Endothelial cell of umbilical vein (primary cell): ENCODE measurements at regions of chr6 and their contacts with region 1.

Region 1: DNA sequence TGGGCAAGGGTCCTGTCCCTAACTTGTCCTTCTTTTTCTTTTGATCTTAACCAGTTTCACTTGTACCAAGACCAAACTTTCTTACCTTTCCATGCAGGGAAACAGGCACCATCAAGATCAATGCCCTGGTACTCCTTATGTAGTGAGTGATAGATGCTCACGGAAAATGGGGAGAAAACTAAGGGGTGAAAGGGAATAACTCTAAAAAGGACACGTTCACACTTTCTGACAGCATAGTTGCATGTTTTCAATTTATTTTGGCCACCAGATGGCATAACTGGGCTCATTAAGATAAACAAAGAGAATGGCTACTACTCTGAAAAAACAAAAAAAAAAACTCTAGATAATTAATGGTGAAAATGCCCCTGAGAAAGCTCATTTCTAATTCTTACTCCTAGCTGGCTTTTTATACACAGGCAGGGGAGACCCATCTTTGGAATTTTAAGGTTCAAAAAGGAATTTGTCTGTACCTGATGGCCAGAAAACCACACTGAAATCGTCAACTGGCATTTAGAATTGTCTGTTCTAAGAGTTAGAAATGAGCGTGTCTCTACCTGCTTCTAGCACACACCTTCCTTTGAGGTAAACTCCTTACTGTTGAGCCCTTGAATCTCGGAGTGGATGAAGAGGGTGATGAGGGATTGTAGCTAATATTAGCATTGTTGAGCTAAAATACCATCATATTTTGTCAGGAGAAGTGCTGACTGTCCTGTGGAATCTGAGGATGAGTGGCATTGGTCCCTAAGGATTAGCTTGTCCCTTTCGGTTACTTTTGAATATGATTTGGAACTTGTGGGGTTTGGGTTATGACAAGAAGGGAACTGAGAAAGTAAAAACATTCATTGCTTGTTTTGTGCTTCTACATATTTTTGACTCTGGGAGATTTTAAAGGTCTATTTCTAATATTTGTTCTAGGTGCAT is 62.2 kb upstream of the DDR1 start:
- DNase-seq: peak; percentile 75
- H3K4me3 ChIP-seq: no peak overlapping the region
- H3K27ac ChIP-seq: peak overlapping the region; percentile 21
- H3K4me1 ChIP-seq: peaks cover 36% of the 10 kb centered on the region
- H3K27me3 ChIP-seq: no peaks in the 10 kb centered on the region
- CTCF ChIP-seq: peak; percentile 49 to 52
- POLR2A ChIP-seq: no peak

Region 2: GRCh38 chr6:30759575-30760239 is 62.4 kb before region 1 on chr6:
- CTCF ChIA-PET with region 1: interaction called, 12 read pairs
- POLR2A ChIA-PET with region 1: no interaction called
- dilution Hi-C with region 1: no loop called
- intact Hi-C with region 1: loop called (anchors 1 kb)
- DNase-seq: peak; percentile 74
- H3K4me3 ChIP-seq: no peak overlapping the region
- H3K27ac ChIP-seq: peak overlapping the region; percentile 91
- H3K4me1 ChIP-seq: peaks cover 34% of the 10 kb centered on the region
- H3K27me3 ChIP-seq: no peaks in the 10 kb centered on the region
- CTCF ChIP-seq: no peak
- POLR2A ChIP-seq: no peak

Region 3: GRCh38 chr6:30769088-30769852 is 52.9 kb before region 1 on chr6:
- CTCF ChIA-PET with region 1: interaction called, 12 read pairs
- POLR2A ChIA-PET with region 1: interaction called, 5 read pairs
- dilution Hi-C with region 1: no loop called
- intact Hi-C with region 1: loop called (anchors 1 kb)
- DNase-seq: peak; percentile 94
- H3K4me3 ChIP-seq: peak overlapping the region in 1 of 3 experiments; percentile 35
- H3K27ac ChIP-seq: peak overlapping the region; percentile 96
- H3K4me1 ChIP-seq: peaks cover 29% of the 10 kb centered on the region
- H3K27me3 ChIP-seq: no peaks in the 10 kb centered on the region
- CTCF ChIP-seq: no peak
- POLR2A ChIP-seq: peak; percentile 63

Region 4: GRCh38 chr6:31068669-31069340 is 246.7 kb after region 1 on chr6:
- CTCF ChIA-PET with region 1: interaction called, 35 read pairs
- POLR2A ChIA-PET with region 1: no interaction called
- dilution Hi-C with region 1: no loop called
- intact Hi-C with region 1: no loop called
- DNase-seq: peak; percentile 73
- H3K4me3 ChIP-seq: no peak overlapping the region
- H3K27ac ChIP-seq: no peak overlapping the region
- H3K4me1 ChIP-seq: peaks cover 6% of the 10 kb centered on the region
- H3K27me3 ChIP-seq: peaks cover 5 to 8% of the 10 kb centered on the region in 2 experiments
- CTCF ChIP-seq: peak; percentile 82 to 91
- POLR2A ChIP-seq: no peak

Region 5: GRCh38 chr6:32070814-32071543 is 1248.9 kb after region 1 on chr6:
- CTCF ChIA-PET with region 1: no interaction called
- POLR2A ChIA-PET with region 1: no interaction called
- dilution Hi-C with region 1: no loop called
- intact Hi-C with region 1: no loop called
- DNase-seq: no peak
- H3K4me3 ChIP-seq: no peak overlapping the region
- H3K27ac ChIP-seq: no peak overlapping the region
- H3K4me1 ChIP-seq: no peaks in the 10 kb centered on the region
- H3K27me3 ChIP-seq: peaks cover 0 to 3% of the 10 kb centered on the region in 2 experiments
- CTCF ChIP-seq: no peak
- POLR2A ChIP-seq: no peak